ENCODE measurements at regions of chr7 and their contacts with region 1.

Region 1: GRCh38 chr7:29921404-29922010 is 68.1 kb downstream of the SCRN1 start:
- DNase-seq: no peak
- H3K4me3 ChIP-seq: no peak overlapping the region
- H3K27ac ChIP-seq: no peak overlapping the region
- H3K4me1 ChIP-seq: no peaks in the 10 kb centered on the region
- H3K27me3 ChIP-seq: no peaks in the 10 kb centered on the region
- CTCF ChIP-seq: peak; percentile 65 to 85 (median 70)

Region 2: DNA sequence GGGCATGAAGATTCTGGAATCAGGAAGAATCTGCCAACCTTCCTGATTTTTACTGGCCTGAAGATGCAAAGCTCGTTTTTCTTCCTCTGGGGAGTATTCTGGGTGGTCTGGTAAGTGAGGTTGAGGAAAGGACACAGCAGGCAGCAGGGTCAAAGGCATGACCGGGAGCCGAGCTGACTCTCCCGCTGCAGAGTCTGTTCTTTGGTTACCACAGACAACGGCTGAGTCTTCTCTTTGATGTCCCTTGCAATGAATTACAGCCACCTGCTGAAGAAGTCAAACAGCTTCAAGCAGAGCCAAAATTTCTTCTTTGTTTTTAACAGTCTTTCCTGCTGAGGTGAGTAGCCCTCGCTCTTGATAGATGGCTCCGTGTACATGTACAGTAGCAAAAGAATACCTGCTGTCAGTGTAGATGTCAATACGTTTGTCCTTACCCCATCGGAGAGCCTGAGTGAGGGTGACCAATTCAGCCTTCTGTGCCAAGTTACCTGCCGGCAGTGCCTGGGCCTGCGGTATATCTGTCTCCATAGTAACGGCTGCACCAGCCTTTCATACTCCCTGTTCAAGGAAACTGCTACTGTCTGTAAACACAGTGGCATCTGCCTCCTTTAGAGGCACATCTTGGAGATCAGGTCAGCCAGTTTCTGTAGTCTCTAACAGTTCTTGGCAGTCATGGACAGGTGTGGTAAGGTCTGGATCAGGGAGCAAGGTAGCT is 281.5 kb before region 1 on chr7:
- intact Hi-C with region 1: loop called (anchors 5 kb)
- DNase-seq: no peak
- H3K4me3 ChIP-seq: no peak overlapping the region
- H3K27ac ChIP-seq: no peak overlapping the region
- H3K4me1 ChIP-seq: no peaks in the 10 kb centered on the region
- H3K27me3 ChIP-seq: no peaks in the 10 kb centered on the region
- CTCF ChIP-seq: no peak

Region 3: DNA sequence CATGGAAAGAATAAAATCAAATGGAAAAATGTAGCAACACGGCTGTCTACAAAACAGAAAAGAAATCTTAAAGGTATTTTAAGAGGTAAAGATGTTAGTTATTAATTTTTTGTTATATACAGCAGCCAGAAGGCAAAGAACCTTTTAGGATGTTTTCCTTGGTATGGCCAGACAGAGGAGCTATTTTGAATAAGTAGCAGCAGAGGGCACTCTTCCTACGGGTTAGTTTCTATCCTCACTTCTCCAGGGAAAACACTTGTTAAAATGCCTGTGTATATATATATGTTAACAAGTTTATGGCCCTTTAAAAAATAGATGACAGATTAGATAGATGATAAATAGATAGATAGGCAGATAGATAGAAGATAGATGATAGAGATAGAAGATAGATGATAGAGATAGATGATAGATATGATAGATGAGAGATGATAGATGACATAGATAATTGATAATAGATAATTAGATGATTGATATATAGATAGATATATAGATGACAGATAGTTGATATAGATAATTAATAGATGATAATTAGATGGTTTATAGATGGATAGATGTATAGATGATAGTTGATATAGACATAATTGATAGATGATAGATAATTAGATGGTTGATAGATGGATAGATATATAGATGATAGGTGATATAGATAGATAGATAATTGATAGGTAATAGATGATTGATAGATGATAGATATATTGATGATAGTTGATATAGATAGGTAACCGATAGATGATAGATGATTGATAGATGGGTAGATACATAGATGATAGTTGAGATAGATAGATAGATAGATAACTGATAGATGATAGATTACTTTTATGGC is 173.0 kb before region 1 on chr7:
- intact Hi-C with region 1: loop called (anchors 2 kb)
- DNase-seq: no peak
- H3K4me3 ChIP-seq: no peak overlapping the region
- H3K27ac ChIP-seq: no peak overlapping the region
- H3K4me1 ChIP-seq: no peaks in the 10 kb centered on the region
- H3K27me3 ChIP-seq: no peaks in the 10 kb centered on the region
- CTCF ChIP-seq: peak in 2 of 3 experiments; percentile 30 to 49

Region 4: DNA sequence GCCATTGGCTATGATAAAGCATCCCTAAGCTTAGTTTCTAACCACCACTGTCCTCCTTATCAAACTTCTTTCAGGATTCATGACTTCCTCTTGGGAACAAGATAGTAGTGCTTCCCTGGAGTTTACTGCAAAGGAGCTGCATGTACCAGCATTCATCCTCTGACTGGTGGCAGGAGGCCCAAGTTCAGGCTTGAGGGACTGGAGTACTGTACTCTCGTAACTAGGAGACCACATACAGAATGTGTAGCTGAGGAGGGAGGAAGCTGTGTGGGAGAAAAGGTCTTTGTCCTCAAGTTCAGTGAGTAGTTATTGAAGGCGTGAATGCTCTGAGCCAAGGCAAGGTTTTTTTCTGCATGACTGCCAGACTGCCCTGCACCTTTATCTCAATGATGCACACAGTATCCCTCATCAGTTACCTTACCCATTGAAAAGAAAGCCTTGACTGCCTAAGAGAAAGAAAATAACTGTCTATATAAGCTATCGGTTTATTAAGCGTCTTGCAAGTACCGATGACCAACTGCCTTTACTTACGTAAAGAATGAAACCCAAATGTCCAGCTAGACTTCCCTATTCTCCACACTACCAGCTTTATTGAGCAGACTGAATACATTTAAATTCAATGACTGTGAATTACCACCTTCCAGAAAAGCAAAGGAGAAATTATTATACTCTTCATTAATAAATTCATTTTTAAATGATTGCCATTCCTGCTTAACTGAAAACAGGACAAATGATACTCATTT is 55.3 kb after region 1 on chr7:
- intact Hi-C with region 1: no loop called
- DNase-seq: no peak
- H3K4me3 ChIP-seq: no peak overlapping the region
- H3K27ac ChIP-seq: no peak overlapping the region
- H3K4me1 ChIP-seq: no peaks in the 10 kb centered on the region
- H3K27me3 ChIP-seq: no peaks in the 10 kb centered on the region
- CTCF ChIP-seq: no peak